Activated B cell treated with CpG ODN at 0.5 μM for 24 hours (primary cell): ENCODE measurements at regions of chr5 and their contacts with region 1.

Region 1: DNA sequence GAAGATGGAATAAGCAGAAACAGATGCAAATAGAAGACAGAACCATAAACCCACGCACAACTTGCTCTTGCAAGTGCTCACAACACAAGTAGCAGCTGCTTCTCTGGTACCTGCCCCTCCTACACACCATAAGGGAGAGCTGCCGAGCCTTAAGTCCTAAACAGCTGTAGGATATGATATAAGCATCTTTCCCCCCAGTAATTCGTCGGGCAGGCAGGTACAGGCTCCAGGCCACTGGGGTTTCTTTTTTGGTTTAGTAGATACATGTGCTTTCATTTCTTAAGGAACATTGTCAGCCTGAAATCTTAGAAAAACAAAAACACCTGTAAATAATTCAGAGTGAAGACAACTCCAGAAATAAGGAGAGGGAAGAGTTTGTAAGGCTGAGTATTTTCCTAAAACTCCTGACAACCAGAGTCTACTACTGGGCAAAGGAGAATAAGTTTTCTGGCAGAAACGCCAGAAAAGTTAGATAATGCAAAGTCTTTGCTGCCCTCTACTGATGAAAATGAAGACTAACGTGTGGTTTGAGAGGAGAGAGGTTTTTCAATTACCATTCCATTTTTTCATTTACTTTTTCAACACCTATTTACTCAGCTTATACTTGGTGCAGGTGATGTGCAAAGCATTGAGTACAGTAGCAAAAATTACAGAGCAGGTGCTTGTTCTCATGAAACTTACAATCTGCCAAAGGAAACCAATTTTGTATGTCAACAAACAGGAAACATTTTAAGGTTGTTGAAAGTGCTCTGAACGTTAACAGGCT is 20.1 kb upstream of the TCERG1 start:
- DNase-seq: no peak
- ATAC-seq: no peak
- H3K4me3 Mint-ChIP-seq: no peak overlapping the region
- H3K27ac Mint-ChIP-seq: no peak overlapping the region
- H3K4me1 Mint-ChIP-seq: peaks cover 6% of the 10 kb centered on the region
- H3K27me3 Mint-ChIP-seq: peaks cover 21% of the 10 kb centered on the region
- CTCF ChIP-seq: no peak

Region 2: GRCh38 chr5:145697251-145697990 is 729.6 kb before region 1 on chr5:
- CTCF ChIA-PET with region 1: no interaction called
- POLR2A ChIA-PET with region 1: no interaction called
- intact Hi-C with region 1: loop called (anchors 5 kb)
- DNase-seq: no peak
- ATAC-seq: no peak
- H3K4me3 Mint-ChIP-seq: no peak overlapping the region
- H3K27ac Mint-ChIP-seq: no peak overlapping the region
- H3K4me1 Mint-ChIP-seq: no peaks in the 10 kb centered on the region
- H3K27me3 Mint-ChIP-seq: no peaks in the 10 kb centered on the region
- CTCF ChIP-seq: no peak

Region 3: DNA sequence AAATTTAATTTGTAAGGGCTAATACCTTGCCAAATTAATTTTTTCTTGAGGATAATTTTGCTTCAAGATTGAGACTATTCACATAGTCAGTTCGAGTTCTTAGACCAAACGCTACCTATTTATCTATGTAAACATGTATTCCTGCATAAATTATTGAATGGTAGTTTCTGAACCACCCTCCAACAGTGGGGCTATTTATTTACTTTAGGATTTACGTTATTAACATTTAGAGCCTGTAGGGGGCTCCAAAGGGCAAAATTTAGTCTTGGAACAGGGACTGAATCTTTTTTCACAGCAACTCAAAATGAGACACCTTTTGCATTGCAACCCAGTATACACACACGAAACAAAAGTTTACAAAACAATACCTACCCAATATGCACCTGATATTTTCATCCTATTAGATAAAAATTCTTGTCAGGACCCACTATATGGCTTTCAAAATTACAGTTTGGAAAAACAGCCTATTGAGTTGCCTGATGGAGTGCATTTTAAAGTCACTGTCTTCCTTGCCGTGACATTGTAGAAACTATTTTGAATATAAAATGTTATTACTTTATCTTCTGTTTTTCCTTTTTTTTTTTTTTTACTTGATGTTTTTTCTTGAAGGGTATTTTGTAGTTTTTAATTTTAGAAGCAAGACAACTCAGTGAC is 135.5 kb before region 1 on chr5:
- CTCF ChIA-PET with region 1: interaction called, 6 read pairs
- POLR2A ChIA-PET with region 1: no interaction called
- intact Hi-C with region 1: loop called (anchors 1 kb)
- DNase-seq: no peak
- ATAC-seq: peak; percentile 50
- H3K4me3 Mint-ChIP-seq: no peak overlapping the region
- H3K27ac Mint-ChIP-seq: no peak overlapping the region
- H3K4me1 Mint-ChIP-seq: no peaks in the 10 kb centered on the region
- H3K27me3 Mint-ChIP-seq: no peaks in the 10 kb centered on the region
- CTCF ChIP-seq: no peak